RWPE1 (cell line): ENCODE measurements at regions of chr13 and their contacts with region 1.

Region 1: DNA sequence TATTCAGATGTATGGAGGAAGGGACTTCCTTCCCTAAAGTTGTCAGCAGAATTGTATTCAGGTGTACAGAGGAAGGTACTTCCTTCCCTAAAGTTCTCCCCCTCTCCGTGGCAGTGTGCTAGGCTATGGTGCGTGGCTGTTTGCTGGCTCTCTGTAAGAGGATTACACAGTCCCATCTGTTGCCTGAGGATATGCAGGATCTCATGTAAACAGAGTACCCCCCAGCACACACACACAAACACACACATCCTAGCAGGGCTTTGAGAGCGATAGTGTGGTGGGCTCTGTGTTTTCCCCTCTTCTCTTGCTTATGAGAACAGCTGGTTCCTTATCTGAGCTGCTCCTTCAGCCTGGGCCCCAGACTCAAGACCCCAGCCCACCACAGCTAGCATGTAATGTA is 10.3 kb downstream of the NEK5 start:
- DNase-seq: no peak
- H3K27ac ChIP-seq: no peak overlapping the region
- CTCF ChIP-seq: no peak

Region 2: DNA sequence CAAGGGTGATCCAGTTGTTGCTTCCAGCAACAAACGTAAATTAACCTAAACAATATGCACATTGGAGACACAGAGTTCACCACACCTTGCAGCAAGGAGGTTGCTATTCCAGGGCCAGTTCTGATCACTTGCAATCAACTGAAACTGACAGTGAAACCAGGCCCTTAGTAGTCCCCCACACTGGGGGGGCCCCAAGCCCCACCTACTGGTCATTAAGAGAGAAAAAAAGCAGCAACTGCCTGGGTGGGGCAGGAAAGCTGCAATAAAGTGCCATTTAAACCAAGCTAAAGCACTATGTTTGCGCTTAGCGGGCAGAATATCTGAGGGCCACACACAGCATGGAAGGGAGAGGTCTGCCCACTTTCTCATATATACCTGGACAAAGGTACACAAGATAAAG is 158.8 kb before region 1 on chr13:
- CTCF ChIA-PET with region 1: interaction called, 11 read pairs
- POLR2A ChIA-PET with region 1: no interaction called
- DNase-seq: no peak
- H3K27ac ChIP-seq: no peak overlapping the region
- CTCF ChIP-seq: no peak

Region 3: DNA sequence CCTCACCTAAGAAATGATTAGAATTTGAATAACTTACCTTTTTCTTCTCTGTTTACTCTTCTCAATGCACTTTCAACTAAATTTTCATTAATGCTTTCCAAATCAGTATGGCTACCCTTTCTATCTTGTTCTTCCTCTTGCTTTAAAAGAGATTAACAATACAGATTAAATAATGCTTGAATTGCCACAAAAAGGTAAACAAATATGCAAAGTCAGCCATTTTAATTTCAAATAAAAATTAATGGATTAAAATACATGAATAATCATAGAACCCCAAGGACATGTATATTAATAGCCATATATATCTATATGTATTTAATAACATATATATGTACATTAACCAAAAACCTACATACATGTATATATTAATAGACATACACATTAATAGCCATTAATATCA is 18.2 kb after region 1 on chr13:
- CTCF ChIA-PET with region 1: no interaction called
- POLR2A ChIA-PET with region 1: no interaction called
- DNase-seq: no peak
- H3K27ac ChIP-seq: no peak overlapping the region
- CTCF ChIP-seq: no peak